IMR-90 (cell line): ENCODE measurements at regions of chr6 and their contacts with region 1.

Region 1: DNA sequence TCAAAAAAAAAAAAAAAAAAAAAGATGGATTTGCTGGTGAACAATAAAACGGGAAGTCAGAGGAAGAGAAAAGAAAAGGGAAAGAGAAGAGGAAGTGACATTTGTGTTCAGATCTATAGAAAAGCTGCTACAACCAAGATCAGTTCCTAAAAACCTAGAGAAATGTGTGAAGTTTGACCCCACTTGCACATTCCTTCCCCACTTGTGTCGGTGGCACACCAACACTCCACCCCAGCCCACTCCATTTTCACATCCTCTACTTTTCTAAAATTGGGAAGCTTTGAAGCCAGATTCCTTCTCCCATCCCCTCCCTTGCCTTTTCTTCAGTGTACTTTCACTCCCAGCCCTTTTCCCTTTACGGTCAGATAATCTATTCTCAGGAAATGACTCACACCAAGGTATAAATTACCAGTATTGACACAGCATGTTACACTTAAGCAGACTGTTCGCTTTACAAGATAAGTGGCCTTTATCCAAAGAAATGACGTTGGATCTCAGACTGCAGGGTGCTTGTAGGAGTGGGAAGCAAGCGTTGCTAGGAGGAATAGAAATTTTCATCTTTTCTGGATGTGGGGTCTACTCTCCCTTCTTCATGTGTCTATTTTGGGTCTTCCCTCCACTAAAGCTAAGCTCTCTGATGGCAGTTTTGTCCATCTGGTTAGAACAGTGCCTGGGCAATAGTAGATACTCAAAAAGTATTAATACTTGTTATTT is 92.5 kb upstream of the ADGRF1 start:
- DNase-seq: peak; percentile 96
- ATAC-seq: peak; percentile 82
- H3K4me3 ChIP-seq: no peak overlapping the region
- H3K27ac ChIP-seq: peak overlapping the region; percentile 91
- H3K4me1 ChIP-seq: peaks cover 9% of the 10 kb centered on the region
- H3K27me3 ChIP-seq: no peaks in the 10 kb centered on the region
- CTCF ChIP-seq: no peak
- POLR2A ChIP-seq: no peak
- RAD21 ChIP-seq: no peak

Region 2: GRCh38 chr6:47168183-47168582 is 33.5 kb after region 1 on chr6:
- CTCF ChIA-PET with region 1: interaction called, 3 read pairs
- POLR2A ChIA-PET with region 1: interaction called, 14 read pairs
- dilution Hi-C with region 1: no loop called
- in situ Hi-C with region 1: no loop called
- intact Hi-C with region 1: loop called (anchors 2 kb)
- DNase-seq: peak; percentile 98
- ATAC-seq: peak; percentile 97
- H3K4me3 ChIP-seq: no peak overlapping the region
- H3K27ac ChIP-seq: peak overlapping the region; percentile 92
- H3K4me1 ChIP-seq: peaks cover 17% of the 10 kb centered on the region
- H3K27me3 ChIP-seq: no peaks in the 10 kb centered on the region
- CTCF ChIP-seq: no peak
- POLR2A ChIP-seq: no peak
- RAD21 ChIP-seq: no peak; the same call in 1 of the 2 replicates